CD8-positive, alpha-beta T cell (primary cell): ENCODE measurements at regions of chr13 and their contacts with region 1.

Region 1: DNA sequence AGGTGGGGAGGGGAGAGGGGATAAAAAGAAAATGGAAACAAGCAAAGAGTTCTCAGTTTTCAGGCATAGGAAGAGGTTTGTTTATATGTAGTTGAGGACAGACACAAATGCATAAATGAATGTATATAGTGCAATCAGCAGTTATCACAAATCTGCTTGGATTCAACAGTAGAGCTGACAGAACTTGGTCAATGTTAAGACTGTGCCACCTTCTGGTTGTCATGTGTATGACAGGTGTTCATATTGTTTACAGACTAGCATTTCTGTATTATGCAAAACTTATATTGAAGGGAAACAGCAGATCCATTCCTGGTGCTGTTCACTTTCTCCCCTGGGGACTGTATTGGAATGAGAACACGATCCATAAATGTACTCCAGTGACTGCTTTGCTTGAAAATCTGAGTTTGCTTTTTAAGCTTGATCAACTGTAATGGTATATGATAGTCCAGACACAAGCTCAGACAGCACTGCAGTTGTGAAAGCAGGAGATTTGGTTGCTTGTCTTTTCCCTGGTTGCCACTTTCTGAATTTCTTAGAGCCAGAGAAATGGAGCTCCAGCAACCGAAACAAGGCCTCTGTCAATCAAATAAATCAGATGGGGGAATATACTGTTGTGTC is 319.5 kb upstream of the OBI1 start:
- DNase-seq: peak in 5 of 9 experiments; percentile 3 to 60 (median 22)
- ATAC-seq: peak; percentile 65
- H3K4me3 ChIP-seq: no peak overlapping the region
- H3K4me3 Mint-ChIP-seq: no peak overlapping the region
- H3K27ac ChIP-seq: no peak overlapping the region
- H3K27ac Mint-ChIP-seq: no peak overlapping the region
- H3K4me1 ChIP-seq: no peaks in the 10 kb centered on the region
- H3K4me1 Mint-ChIP-seq: no peaks in the 10 kb centered on the region
- H3K27me3 ChIP-seq: no peaks in the 10 kb centered on the region
- H3K27me3 Mint-ChIP-seq: peaks cover 27% of the 10 kb centered on the region
- CTCF ChIP-seq: peak; percentile 74

Region 2: GRCh38 chr13:77779552-77780272 is 1198.8 kb before region 1 on chr13:
- CTCF ChIA-PET with region 1: no interaction called
- POLR2A ChIA-PET with region 1: no interaction called
- intact Hi-C with region 1: loop called (anchors 2 to 5 kb)
- DNase-seq: peak in 3 of 9 experiments; percentile 14 to 66 (median 57)
- ATAC-seq: peak; percentile 46
- H3K4me3 ChIP-seq: no peak overlapping the region
- H3K4me3 Mint-ChIP-seq: no peak overlapping the region
- H3K27ac ChIP-seq: no peak overlapping the region
- H3K27ac Mint-ChIP-seq: no peak overlapping the region
- H3K4me1 ChIP-seq: peaks cover 6% of the 10 kb centered on the region
- H3K4me1 Mint-ChIP-seq: peaks cover 12% of the 10 kb centered on the region
- H3K27me3 ChIP-seq: no peaks in the 10 kb centered on the region
- H3K27me3 Mint-ChIP-seq: peaks cover 3% of the 10 kb centered on the region
- CTCF ChIP-seq: peak; percentile 65

Region 3: DNA sequence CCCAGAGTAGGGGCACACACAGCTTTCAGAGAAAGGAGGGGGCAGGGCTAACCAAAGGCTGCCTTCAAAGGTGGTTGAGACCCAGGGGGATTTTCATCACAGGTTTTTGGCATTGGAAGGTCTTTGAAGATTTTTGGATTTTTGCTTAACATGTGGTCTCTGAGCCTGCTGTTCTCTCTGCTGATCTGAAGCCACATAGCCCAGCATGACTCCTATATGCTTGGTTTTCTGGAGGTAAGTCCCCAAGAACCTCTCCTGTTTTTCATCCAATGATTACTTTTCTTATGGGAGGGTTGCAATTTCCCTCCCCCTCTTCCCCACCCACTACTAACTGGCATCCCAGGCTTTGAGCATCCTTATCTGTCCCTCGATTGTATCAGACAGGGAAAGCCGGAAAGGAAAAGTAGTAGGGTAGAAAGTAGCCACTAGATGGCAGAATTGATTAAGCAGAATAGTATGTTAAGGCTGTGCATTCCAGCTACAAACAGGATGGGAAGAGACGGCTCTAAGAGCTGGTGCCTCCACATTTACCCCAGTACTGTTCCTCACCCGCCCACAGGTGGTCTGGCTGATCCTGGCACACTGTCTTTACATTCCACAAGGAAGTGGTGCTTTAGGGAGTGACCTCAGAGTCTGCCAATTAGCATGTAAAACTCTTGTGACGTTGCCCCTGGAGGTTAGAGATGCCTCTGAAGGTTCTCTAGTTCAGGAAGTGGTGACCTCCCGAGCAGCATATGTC is 840.9 kb before region 1 on chr13:
- CTCF ChIA-PET with region 1: interaction called, 35 read pairs
- POLR2A ChIA-PET with region 1: no interaction called
- intact Hi-C with region 1: loop called (anchors 1 kb)
- DNase-seq: peak in 2 of 9 experiments; percentile 50 to 56
- ATAC-seq: no peak
- H3K4me3 ChIP-seq: no peak overlapping the region
- H3K4me3 Mint-ChIP-seq: peak overlapping the region; percentile 60
- H3K27ac ChIP-seq: no peak overlapping the region
- H3K27ac Mint-ChIP-seq: no peak overlapping the region
- H3K4me1 ChIP-seq: no peaks in the 10 kb centered on the region
- H3K4me1 Mint-ChIP-seq: peaks cover 5% of the 10 kb centered on the region
- H3K27me3 ChIP-seq: peaks cover 0 to 3% of the 10 kb centered on the region in 2 experiments
- H3K27me3 Mint-ChIP-seq: peaks cover under 1% of the 10 kb centered on the region
- CTCF ChIP-seq: peak; percentile 55

Region 4: DNA sequence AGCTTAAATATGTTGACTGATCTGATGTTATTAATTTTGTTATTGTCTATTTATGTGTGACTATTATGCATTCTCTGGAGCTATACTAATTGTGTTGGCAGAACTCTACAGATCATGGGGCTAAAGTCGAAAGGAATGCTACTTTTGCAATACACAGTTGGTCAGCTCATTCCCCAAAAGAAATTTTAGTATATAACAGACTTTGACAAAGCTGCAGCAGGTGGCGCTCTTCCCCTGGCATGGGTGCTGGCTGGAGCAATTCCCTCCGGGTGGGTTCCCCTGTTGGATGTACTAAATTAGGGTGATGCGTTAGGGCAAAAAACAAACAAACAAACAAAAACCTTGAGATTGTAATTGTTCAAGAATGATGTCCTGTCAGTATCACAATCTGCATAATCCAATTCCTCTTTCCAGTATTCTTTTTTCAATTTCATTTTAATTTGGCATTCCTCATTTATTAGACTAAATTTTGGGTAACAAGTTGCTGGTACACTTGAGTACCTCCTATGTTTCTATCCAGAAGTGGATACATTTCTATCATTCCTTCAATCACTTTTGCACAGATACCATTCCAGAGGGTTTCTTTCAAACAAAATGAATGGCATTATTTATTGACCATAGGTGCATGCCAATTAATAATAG is 737.1 kb before region 1 on chr13:
- CTCF ChIA-PET with region 1: interaction called, 10 read pairs
- POLR2A ChIA-PET with region 1: no interaction called
- intact Hi-C with region 1: loop called (anchors 5 to 10 kb)
- DNase-seq: peak in 2 of 9 experiments; percentile 2
- ATAC-seq: no peak
- H3K4me3 ChIP-seq: no peak overlapping the region
- H3K4me3 Mint-ChIP-seq: no peak overlapping the region
- H3K27ac ChIP-seq: no peak overlapping the region
- H3K27ac Mint-ChIP-seq: no peak overlapping the region
- H3K4me1 ChIP-seq: no peaks in the 10 kb centered on the region
- H3K4me1 Mint-ChIP-seq: no peaks in the 10 kb centered on the region
- H3K27me3 ChIP-seq: no peaks in the 10 kb centered on the region
- H3K27me3 Mint-ChIP-seq: peaks cover 4% of the 10 kb centered on the region
- CTCF ChIP-seq: no peak

Region 5: GRCh38 chr13:78709028-78709427 is 269.5 kb before region 1 on chr13:
- CTCF ChIA-PET with region 1: no interaction called
- POLR2A ChIA-PET with region 1: no interaction called
- intact Hi-C with region 1: no loop called
- DNase-seq: no peak
- ATAC-seq: no peak
- H3K4me3 ChIP-seq: no peak overlapping the region
- H3K4me3 Mint-ChIP-seq: no peak overlapping the region
- H3K27ac ChIP-seq: no peak overlapping the region
- H3K27ac Mint-ChIP-seq: no peak overlapping the region
- H3K4me1 ChIP-seq: no peaks in the 10 kb centered on the region
- H3K4me1 Mint-ChIP-seq: no peaks in the 10 kb centered on the region
- H3K27me3 ChIP-seq: no peaks in the 10 kb centered on the region
- H3K27me3 Mint-ChIP-seq: peaks cover 24% of the 10 kb centered on the region
- CTCF ChIP-seq: no peak

Region 6: DNA sequence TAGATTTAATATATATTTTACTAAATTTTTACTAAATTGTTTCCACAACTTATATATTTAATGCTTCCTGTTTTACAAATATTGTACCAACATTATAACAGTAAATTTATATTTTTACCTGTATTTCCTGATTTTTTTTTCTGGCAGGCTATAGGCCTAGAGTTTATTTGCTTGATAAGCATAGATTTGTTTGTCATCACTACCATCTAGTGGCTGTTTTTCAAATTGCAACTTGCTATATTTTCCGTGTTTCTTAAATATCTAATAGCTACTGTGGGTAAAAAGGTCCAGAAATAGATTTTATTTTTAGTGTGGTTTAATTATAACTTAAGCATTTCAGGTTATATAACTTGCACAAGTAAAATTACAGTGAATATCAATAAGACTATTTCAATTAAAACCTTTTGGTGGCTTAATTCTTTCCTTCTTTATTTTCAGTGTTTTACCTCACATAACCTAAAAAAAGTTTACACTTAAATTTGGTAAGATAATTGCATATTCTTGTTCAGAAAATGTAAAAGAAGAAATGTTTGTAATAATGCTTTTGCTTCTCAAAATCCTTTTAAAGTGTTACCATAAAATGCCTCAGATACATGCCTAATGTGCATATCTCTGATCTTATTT is 563.0 kb after region 1 on chr13:
- CTCF ChIA-PET with region 1: no interaction called
- POLR2A ChIA-PET with region 1: no interaction called
- intact Hi-C with region 1: loop called (anchors 2 to 5 kb)
- DNase-seq: peak in 3 of 9 experiments; percentile 13 to 80 (median 75)
- ATAC-seq: peak; percentile 71
- H3K4me3 ChIP-seq: no peak overlapping the region
- H3K4me3 Mint-ChIP-seq: no peak overlapping the region
- H3K27ac ChIP-seq: no peak overlapping the region
- H3K27ac Mint-ChIP-seq: no peak overlapping the region
- H3K4me1 ChIP-seq: no peaks in the 10 kb centered on the region
- H3K4me1 Mint-ChIP-seq: no peaks in the 10 kb centered on the region
- H3K27me3 ChIP-seq: no peaks in the 10 kb centered on the region
- H3K27me3 Mint-ChIP-seq: no peaks in the 10 kb centered on the region
- CTCF ChIP-seq: peak; percentile 95